Activated CD8-positive, alpha-beta memory T cell treated with anti-CD3 and anti-CD28 coated beads, Interleukin-2, amount 10 ng/mL, durations not matched to agents 7 days and 5 days (primary cell): ENCODE measurements at regions of chr1 and their contacts with region 1.

Region 1: DNA sequence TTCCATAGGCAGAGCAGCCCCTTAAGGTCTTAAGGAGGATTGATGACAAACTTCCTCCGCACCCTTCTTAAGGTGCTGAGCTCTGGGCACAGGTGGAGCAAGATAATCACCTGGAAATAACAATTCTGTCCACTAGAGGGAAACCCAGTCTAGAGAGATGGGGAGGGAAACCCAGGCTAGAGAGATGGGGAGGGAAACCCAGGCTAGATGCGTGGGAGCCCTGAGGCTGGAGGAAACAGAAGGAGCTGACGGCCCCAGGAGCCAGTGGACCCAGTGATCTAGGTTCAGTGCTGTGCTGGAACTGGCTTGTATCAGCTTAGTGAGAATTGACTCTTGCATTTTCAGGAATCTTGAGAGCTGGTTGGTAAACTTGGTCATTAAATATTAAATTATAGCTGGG is 17.8 kb upstream of the MYCL start:
- DNase-seq: peak; percentile 55
- ATAC-seq: peak; percentile 90
- H3K4me3 Mint-ChIP-seq: no peak overlapping the region
- H3K27ac Mint-ChIP-seq: no peak overlapping the region
- H3K4me1 Mint-ChIP-seq: no peaks in the 10 kb centered on the region
- H3K27me3 Mint-ChIP-seq: peaks cover 9% of the 10 kb centered on the region

Region 2: DNA sequence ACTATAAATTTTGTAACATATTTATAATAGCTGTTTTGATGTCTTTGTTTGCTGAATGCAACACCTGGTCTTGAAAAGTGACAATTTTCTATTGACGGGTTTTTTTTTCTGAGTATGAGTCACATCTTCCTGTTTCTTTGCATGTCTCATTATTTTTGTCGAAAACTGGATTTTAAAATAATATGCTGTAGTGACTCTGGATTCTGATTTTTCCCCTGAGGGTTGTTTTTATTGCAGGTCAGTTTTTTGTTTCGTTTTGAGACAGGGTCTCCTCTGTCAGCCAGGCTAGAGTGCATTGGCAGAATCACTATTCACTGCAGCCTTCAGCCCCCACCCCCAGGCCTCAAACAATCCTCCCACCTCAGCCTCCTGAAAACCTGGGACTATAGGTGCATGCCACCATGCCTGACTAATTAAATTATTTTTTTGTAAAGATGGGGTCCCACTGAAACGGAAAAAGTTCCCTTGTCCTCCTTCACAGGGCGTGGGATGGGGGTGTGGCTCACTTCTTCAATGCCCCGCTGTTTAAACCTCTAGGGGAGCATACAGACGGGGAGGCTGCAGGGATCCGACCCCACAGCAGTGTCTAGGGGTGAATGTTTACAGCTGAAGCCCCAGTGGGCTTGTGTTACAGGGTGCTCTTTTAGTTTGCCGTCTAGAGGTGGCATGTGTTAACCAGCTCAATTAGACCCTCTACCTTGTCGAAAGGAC is 192.2 kb before region 1 on chr1:
- CTCF ChIA-PET with region 1: no interaction called
- DNase-seq: no peak
- ATAC-seq: peak; percentile 36
- H3K4me3 Mint-ChIP-seq: no peak overlapping the region
- H3K27ac Mint-ChIP-seq: no peak overlapping the region
- H3K4me1 Mint-ChIP-seq: peaks cover 21% of the 10 kb centered on the region
- H3K27me3 Mint-ChIP-seq: peaks cover 72% of the 10 kb centered on the region

Region 3: DNA sequence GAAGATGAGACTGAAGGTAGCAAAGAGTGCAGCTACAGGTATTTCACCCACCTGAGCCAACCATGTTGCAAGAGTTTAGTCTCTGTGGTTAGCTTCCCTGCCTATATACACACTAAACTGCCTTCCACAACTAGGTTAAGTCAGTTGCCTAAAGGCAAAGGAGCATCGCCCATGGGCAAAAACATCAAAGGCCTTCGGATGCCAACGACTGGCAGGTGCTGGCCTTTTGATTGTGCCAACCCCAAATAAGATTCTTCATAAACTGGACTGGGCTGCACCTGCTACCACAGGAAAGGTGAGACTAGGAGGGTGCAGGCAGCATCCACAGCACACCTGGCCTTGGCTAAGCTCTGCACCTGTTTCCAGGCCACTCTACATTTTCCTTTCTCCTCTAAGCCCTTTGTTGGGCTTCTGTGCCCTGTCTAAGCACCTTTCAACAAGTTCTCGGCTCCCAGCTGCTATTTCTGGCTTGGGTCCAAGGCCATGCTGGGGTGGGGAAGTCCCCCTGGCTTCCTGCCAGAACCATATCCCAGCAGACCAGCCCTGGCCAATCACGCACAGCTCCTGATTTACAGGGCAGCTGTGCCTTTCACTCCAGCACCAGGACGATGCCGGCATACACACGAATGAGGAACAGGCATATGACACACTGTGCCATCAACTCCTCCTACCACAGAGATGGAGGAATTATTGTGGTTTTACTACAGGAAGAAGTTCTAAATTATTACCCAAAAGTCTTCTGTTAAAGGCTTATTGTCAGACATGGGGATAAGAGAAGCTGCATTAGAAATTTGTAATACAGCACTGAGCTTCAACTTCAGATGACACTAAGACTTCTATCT is 74.0 kb before region 1 on chr1:
- CTCF ChIA-PET with region 1: no interaction called
- DNase-seq: peak; percentile 75
- ATAC-seq: peak; percentile 77
- H3K4me3 Mint-ChIP-seq: no peak overlapping the region
- H3K27ac Mint-ChIP-seq: peak overlapping the region; percentile 74
- H3K4me1 Mint-ChIP-seq: peaks cover 36% of the 10 kb centered on the region
- H3K27me3 Mint-ChIP-seq: no peaks in the 10 kb centered on the region

Region 4: DNA sequence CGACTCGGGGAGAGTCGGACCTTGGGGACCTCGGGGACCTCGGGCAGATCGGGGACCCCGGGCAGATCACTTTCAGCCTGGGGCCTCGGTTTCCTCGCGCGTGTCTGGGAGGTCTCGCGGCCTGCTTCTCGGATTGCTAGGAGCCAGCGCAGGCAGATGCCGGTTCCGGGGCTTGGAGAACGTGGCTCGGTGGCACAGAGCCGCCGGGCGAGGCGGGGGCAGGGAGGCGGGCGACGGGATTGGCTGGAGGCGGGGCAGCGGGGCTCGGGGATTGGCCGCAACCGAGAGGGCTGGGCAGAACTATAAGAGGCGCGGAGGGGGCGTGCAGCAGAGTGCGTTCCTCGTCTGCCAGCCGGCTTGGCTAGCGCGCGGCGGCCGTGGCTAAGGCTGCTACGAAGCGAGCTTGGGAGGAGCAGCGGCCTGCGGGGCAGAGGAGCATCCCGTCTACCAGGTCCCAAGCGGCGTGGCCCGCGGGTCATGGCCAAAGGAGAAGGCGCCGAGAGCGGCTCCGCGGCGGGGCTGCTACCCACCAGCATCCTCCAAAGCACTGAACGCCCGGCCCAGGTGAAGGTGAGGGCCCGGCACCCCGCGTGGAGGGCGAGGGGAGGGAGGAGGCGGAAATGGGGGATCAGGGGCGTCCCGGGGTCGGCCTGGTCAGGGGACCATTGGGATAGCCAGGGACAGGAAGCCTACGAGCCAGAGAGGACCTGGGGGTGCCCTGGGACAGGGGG is 35.4 kb after region 1 on chr1 and contains the start of gene MFSD2A:
- CTCF ChIA-PET with region 1: interaction called, 17 read pairs
- DNase-seq: peak; percentile 88
- ATAC-seq: peak; percentile 92
- H3K4me3 Mint-ChIP-seq: peak within 1 kb of the TSS; percentile 85
- H3K27ac Mint-ChIP-seq: peak within 1 kb of the TSS; percentile 63
- H3K4me1 Mint-ChIP-seq: peaks cover 12% of the 10 kb centered on the region
- H3K27me3 Mint-ChIP-seq: peaks cover 7% of the 10 kb centered on the region
- total RNA-seq, gene MFSD2A: 2.9 to 7.0 TPM

Region 5: DNA sequence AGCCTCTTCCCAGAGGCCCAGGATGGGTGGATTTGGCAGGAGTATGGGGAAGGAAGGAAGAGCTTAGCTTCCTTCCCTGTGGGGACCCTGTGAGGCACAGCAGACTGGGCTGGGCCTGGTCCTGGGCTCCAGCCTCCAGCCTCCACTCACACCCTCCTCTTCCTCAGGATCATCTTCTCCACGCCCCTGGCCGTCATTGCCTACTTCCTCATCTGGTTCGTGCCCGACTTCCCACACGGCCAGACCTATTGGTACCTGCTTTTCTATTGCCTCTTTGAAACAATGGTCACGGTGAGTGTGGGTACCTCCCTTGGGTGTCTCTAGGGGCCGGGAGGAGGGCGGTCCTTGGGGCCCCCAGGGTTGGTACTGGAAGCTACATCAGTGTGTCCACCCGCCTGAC is 45.5 kb after region 1 on chr1:
- CTCF ChIA-PET with region 1: interaction called, 12 read pairs
- DNase-seq: no peak
- ATAC-seq: no peak
- H3K4me3 Mint-ChIP-seq: no peak overlapping the region
- H3K27ac Mint-ChIP-seq: no peak overlapping the region
- H3K4me1 Mint-ChIP-seq: peaks cover 6% of the 10 kb centered on the region
- H3K27me3 Mint-ChIP-seq: no peaks in the 10 kb centered on the region

Region 6: GRCh38 chr1:40032240-40032891 is 112.8 kb after region 1 on chr1:
- CTCF ChIA-PET with region 1: interaction called, 57 read pairs
- DNase-seq: peak; percentile 68
- ATAC-seq: peak; percentile 80
- H3K4me3 Mint-ChIP-seq: no peak overlapping the region
- H3K27ac Mint-ChIP-seq: no peak overlapping the region
- H3K4me1 Mint-ChIP-seq: peaks cover 31% of the 10 kb centered on the region
- H3K27me3 Mint-ChIP-seq: peaks cover 16% of the 10 kb centered on the region